ENCODE measurements at regions of chr9 and their contacts with region 1.

Region 1: DNA sequence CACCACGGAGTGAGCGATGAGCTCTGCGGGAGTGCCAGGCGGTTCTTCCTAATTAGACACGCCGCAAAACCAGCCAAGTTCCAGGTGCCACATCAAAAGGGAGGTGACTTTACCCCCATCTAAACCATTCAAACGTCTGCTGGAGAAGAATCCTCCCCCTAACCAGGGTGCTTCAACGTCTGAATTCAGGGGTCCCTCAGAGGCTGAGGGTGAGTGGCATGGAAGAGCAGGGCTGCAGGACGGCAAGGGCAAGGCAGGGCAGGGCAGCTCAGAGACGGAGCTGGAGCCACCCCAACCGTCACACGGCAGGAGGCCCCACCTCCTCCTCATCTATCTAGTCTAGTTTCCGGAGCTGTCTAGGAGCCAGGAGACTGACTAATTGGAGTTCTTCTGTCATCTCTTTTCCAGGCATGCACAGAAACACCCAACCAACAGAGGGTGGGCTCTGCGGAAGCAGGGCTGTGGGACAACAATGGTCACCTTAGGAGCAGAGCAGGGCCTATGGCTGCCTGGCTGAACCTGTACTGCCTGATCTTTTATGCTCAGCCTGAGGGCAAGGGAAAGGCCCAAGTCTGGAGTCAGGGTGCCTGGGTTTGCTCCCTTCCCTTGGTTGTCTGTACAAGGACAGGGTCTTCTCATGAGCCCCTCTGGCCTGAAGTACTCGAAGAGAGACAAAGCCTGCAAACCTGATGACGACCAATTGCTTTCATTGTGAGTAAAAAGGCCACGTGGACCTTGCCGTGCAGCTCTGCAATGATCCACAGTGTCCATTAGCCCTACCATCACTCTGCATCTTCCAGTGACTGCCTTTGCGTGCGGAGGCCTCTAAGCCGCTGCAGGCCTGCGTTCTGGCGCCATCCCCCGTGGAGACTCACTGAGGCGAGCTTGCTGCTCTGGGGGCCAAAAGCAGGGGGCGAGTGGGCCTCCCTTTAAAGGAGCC is 81.0 kb upstream of the SLC25A51 start:
- DNase-seq: peak; percentile 43 to 67
- ATAC-seq: peak; percentile 74 to 88 (median 82)
- H3K4me3 ChIP-seq: no peak overlapping the region
- H3K27ac ChIP-seq: peak overlapping the region in 5 of 10 donors; percentile 18 to 77 (median 59)
- H3K4me1 ChIP-seq: peaks cover 18 to 72% (median 54%) of the 10 kb centered on the region in 9 donors
- H3K27me3 ChIP-seq: no peaks in the 10 kb centered on the region
- CTCF ChIP-seq: peak in 4 of 9 donors; percentile 9 to 37 (median 26)

Region 2: GRCh38 chr9:37929441-37929895 is 55.5 kb before region 1 on chr9:
- intact Hi-C with region 1: loop called in 1 of 10 experiments (anchors 5 kb)
- DNase-seq: no peak
- ATAC-seq: peak in 6 of 8 donors; percentile 30 to 50 (median 34)
- H3K4me3 ChIP-seq: no peak overlapping the region
- H3K27ac ChIP-seq: peak overlapping the region in 2 of 10 donors; percentile 16 to 24
- H3K4me1 ChIP-seq: peaks cover 0 to 43% (median 29%) of the 10 kb centered on the region in 9 donors
- H3K27me3 ChIP-seq: no peaks in the 10 kb centered on the region
- CTCF ChIP-seq: no peak